Gastrocnemius medialis (tissue), 4 donors: ENCODE measurements at regions of chr1 and their contacts with region 1.

Region 1: GRCh38 chr1:2314803-2315673 is 76.3 kb downstream of the MORN1 start:
- DNase-seq: no peak
- ATAC-seq: peak; percentile 32 to 41
- H3K4me3 ChIP-seq: peak overlapping the region; percentile 49 to 57 (median 52)
- H3K27ac ChIP-seq: peak overlapping the region; percentile 61 to 72 (median 69)
- H3K4me1 ChIP-seq: peaks cover 17 to 18% of the 10 kb centered on the region in 2 donors
- H3K27me3 ChIP-seq: peaks cover 0 to 17% (median 3%) of the 10 kb centered on the region in 3 donors
- CTCF ChIP-seq: peak; percentile 51 to 98 (median 88)
- POLR2A ChIP-seq: no peak

Region 2: GRCh38 chr1:2189459-2190425 is 125.3 kb before region 1 on chr1:
- in situ Hi-C with region 1: no loop called
- intact Hi-C with region 1: no loop called
- DNase-seq: peak; percentile 96 to 97
- ATAC-seq: peak; percentile 93 to 94
- H3K4me3 ChIP-seq: peak overlapping the region; percentile 72 to 88 (median 72)
- H3K27ac ChIP-seq: peak overlapping the region; percentile 97 to 100 (median 98)
- H3K4me1 ChIP-seq: peaks cover 21 to 39% of the 10 kb centered on the region in 2 donors
- H3K27me3 ChIP-seq: no peaks in the 10 kb centered on the region
- CTCF ChIP-seq: peak in 1 of 5 experiments; percentile 18
- POLR2A ChIP-seq: peak; percentile 94 to 96

Region 3: GRCh38 chr1:2205191-2205952 is 109.7 kb before region 1 on chr1:
- in situ Hi-C with region 1: loop called in 2 of 4 experiments (anchors 25 kb)
- intact Hi-C with region 1: loop called (anchors 5 kb)
- DNase-seq: peak; percentile 96 to 98
- ATAC-seq: peak; percentile 77 to 83
- H3K4me3 ChIP-seq: peak overlapping the region; percentile 51 to 76 (median 66)
- H3K27ac ChIP-seq: peak overlapping the region; percentile 73 to 88 (median 81)
- H3K4me1 ChIP-seq: peaks cover 12 to 30% of the 10 kb centered on the region in 2 donors
- H3K27me3 ChIP-seq: no peaks in the 10 kb centered on the region
- CTCF ChIP-seq: peak in 3 of 5 experiments; percentile 17 to 35 (median 34)
- POLR2A ChIP-seq: peak; percentile 37 to 44

Region 4: GRCh38 chr1:2212542-2213491 is 102.2 kb before region 1 on chr1:
- in situ Hi-C with region 1: loop called in 2 of 4 experiments (anchors 25 kb)
- intact Hi-C with region 1: loop called (anchors 5 kb)
- DNase-seq: peak; percentile 63 to 79
- ATAC-seq: peak; percentile 66
- H3K4me3 ChIP-seq: peak overlapping the region; percentile 16 to 45 (median 36)
- H3K27ac ChIP-seq: peak overlapping the region; percentile 67 to 91 (median 86)
- H3K4me1 ChIP-seq: peaks cover 19 to 43% of the 10 kb centered on the region in 2 donors
- H3K27me3 ChIP-seq: no peaks in the 10 kb centered on the region
- CTCF ChIP-seq: peak in 4 of 5 experiments; percentile 15 to 33 (median 22)
- POLR2A ChIP-seq: peak; percentile 13 to 41

Region 5: DNA sequence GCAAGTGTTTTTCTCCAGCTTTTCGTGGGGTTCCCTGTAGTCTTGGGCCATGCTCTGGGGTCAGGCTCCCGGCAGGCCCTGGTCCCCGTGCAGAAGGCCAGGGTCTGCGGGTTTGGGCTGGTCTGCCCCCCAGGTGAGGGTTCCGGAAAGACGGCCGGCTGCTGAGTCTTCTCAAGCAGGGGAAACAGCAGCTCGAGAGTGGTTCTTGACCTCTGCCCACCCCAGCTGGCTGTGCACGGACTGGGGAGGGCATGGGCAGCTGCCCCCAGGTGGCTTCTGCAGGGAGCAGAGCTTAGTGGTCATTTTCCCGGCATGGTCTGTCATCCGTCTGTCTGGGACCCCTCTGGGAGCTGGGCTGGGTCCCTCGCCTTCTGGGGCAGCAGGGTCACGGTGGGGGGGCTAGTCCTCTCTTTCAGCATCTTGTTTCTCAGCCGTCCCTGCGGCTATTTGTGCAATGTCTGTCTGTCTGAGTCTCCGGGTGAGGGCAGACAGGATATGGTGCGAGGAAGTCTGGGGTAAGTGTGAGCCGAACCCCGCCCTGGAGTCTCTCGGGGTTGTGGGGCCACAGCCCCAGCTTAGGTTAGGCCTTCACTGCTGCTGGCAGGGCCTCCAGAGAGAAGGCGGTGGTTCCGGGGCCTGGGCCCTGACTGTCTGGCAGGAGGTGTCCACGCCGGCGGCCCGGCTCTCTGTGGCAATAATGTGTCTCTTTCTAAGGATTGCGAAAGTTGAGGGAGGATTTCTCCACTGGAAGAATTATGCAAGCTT is 80.9 kb before region 1 on chr1:
- in situ Hi-C with region 1: no loop called
- intact Hi-C with region 1: loop called (anchors 5 kb)
- DNase-seq: peak; percentile 86 to 94
- ATAC-seq: peak; percentile 71 to 82
- H3K4me3 ChIP-seq: peak overlapping the region; percentile 24 to 39 (median 32)
- H3K27ac ChIP-seq: peak overlapping the region; percentile 83 to 93 (median 85)
- H3K4me1 ChIP-seq: peaks cover 93 to 99% of the 10 kb centered on the region in 2 donors
- H3K27me3 ChIP-seq: no peaks in the 10 kb centered on the region
- CTCF ChIP-seq: no peak
- POLR2A ChIP-seq: peak in 1 of 2 donors; percentile 14

Region 6: GRCh38 chr1:2381741-2382620 is 66.9 kb after region 1 on chr1:
- in situ Hi-C with region 1: no loop called
- intact Hi-C with region 1: loop called (anchors 5 kb)
- DNase-seq: peak; percentile 41 to 67
- ATAC-seq: peak; percentile 64 to 81
- H3K4me3 ChIP-seq: no peak overlapping the region
- H3K27ac ChIP-seq: no peak overlapping the region
- H3K4me1 ChIP-seq: peaks cover 0 to 5% of the 10 kb centered on the region in 2 donors
- H3K27me3 ChIP-seq: no peaks in the 10 kb centered on the region
- CTCF ChIP-seq: peak; percentile 72 to 92 (median 88)
- POLR2A ChIP-seq: no peak